ENCODE measurements at regions of chr1 and their contacts with region 1.

Region 1: GRCh38 chr1:151399890-151400495 is 620 bp downstream of the PSMB4 start:
- DNase-seq: peak; percentile 38
- ATAC-seq: peak; percentile 8
- H3K4me3 Mint-ChIP-seq: peak overlapping the region; percentile 86
- H3K27ac Mint-ChIP-seq: peak overlapping the region; percentile 96
- H3K4me1 Mint-ChIP-seq: peaks cover 35% of the 10 kb centered on the region
- H3K27me3 Mint-ChIP-seq: no peaks in the 10 kb centered on the region
- CTCF ChIP-seq: no peak

Region 2: GRCh38 chr1:151411884-151412283 is 11.9 kb after region 1 on chr1:
- CTCF ChIA-PET with region 1: interaction called, 3 read pairs
- POLR2A ChIA-PET with region 1: interaction called, 10 read pairs
- intact Hi-C with region 1: no loop called
- DNase-seq: no peak
- ATAC-seq: no peak
- H3K4me3 Mint-ChIP-seq: no peak overlapping the region
- H3K27ac Mint-ChIP-seq: no peak overlapping the region
- H3K4me1 Mint-ChIP-seq: no peaks in the 10 kb centered on the region
- H3K27me3 Mint-ChIP-seq: no peaks in the 10 kb centered on the region
- CTCF ChIP-seq: no peak

Region 3: DNA sequence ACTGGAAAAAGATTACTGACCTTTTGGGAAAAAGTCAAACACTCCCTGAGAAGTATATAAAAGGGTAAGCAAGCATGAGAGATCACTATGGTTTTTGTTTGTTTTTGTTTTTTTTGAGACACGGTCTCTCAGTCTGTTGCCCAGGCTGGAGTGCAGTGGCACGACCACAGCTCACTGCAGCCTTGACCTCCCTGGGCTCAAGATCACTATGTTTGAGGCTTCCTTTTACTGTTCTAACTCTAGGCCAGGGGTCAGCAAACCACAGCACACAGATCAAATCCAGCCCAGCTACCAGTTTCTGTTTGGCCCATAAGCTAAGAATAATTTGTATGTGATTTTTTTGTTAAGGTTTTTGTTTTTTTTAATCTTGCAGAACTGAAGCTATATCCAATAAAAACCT is 25.1 kb after region 1 on chr1:
- CTCF ChIA-PET with region 1: interaction called, 3 read pairs
- POLR2A ChIA-PET with region 1: interaction called, 11 read pairs
- intact Hi-C with region 1: no loop called
- DNase-seq: no peak
- ATAC-seq: no peak
- H3K4me3 Mint-ChIP-seq: no peak overlapping the region
- H3K27ac Mint-ChIP-seq: peak overlapping the region; percentile 4
- H3K4me1 Mint-ChIP-seq: no peaks in the 10 kb centered on the region
- H3K27me3 Mint-ChIP-seq: no peaks in the 10 kb centered on the region
- CTCF ChIP-seq: no peak

Region 4: DNA sequence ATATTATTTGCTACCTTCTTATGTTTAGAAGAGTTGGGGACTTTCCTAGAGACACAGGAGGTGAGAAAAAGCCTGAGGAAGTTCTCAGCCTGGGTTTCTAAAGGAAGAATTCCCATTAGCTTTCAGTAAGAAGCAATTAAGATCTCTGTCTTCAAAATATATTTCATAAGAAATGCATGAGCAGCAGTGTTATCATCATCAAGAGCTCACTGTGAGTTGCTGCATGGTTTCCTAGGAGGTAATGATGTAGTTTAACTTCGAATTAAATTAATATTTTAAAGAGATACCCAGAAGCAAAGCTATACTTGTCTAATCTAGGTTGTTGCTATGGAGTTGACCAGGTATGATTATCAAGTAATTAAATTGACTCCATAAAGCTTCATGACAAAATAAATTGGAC is 65.0 kb after region 1 on chr1:
- CTCF ChIA-PET with region 1: no interaction called
- POLR2A ChIA-PET with region 1: no interaction called
- intact Hi-C with region 1: no loop called
- DNase-seq: no peak
- ATAC-seq: no peak
- H3K4me3 Mint-ChIP-seq: no peak overlapping the region
- H3K27ac Mint-ChIP-seq: no peak overlapping the region
- H3K4me1 Mint-ChIP-seq: peaks cover under 1% of the 10 kb centered on the region
- H3K27me3 Mint-ChIP-seq: peaks cover 8% of the 10 kb centered on the region
- CTCF ChIP-seq: no peak

Region 5: DNA sequence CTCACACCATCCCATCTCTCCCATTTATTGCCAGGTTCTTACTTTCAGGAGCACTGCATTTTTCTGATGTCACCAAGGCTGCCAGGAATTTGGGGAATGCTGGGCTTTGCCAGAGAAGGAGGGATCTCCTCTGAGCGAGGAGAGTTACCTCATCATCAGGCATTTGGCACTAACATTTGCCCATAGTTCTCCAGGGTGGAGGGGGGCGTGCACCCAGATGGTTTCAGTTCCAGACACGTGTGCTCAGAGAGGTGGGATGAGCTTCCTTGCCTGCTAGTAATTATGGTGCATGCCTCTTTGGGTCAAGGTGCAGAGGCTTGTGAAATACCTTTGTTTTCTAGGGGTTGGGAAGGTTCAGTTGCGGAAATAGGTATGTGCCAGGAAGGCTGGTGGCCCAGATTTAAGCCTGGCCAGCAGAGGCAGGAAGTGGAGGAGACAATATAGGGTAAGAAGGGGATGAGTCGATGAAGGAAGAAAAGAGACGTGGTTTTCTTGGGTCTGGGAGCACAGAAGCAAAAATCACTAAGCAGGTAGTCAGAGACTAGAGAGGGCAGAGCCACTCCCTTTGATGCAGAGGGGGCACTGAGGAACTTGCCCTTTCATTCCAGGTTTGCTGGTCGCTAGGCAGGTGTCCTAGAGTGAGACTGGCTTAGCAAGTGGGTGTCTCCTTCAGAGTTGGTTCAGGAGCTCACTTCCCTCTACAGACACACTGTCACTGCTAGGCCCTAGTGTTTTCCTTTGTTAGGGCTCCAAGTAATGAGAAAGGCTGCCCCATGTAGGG is 147.3 kb after region 1 on chr1:
- CTCF ChIA-PET with region 1: no interaction called
- POLR2A ChIA-PET with region 1: no interaction called
- intact Hi-C with region 1: no loop called
- DNase-seq: no peak
- ATAC-seq: no peak
- H3K4me3 Mint-ChIP-seq: no peak overlapping the region
- H3K27ac Mint-ChIP-seq: no peak overlapping the region
- H3K4me1 Mint-ChIP-seq: no peaks in the 10 kb centered on the region
- H3K27me3 Mint-ChIP-seq: no peaks in the 10 kb centered on the region
- CTCF ChIP-seq: no peak

Region 6: DNA sequence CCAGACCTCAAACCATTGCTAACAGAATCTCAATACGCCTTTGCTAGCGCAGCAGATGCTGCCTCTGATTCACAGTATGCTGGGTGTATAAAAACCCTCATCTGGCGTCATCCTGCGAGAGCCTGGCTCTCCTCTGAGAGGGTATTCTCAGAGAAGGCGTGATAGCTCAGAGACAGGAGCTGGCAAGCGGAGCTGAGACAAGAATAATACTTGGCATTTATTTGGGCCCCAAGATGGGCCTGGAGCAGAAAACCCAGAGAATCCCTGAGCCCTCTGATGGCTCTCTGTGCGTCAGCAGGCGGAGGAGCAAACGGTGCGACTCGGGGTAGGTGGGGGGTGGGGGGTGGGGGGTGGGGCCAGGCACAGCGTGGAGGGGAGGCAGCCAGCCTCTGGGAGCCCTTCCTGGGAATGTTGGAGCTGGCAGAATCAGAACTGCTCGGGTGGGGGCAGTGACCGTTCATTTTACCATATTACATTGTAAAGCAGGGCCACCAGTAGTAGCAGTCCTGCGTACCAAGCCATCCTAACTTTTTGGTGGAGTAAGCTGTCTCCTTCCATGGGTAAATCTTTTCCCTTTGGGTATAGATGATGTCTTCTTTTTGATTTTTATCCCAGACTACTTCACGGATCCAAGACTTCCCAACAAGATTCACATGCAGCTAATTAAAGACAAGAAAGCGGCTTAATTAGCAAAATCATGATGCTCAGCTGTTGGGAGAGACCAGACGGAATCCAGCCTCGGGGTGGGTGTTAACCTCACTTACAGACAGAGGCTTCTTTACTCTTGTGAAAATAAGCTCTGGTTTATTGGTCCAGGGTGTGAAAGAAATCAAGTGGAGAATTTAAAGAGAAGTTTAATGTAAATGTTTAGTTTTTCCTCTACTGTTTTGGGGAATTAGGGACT is 328.4 kb after region 1 on chr1:
- CTCF ChIA-PET with region 1: no interaction called
- POLR2A ChIA-PET with region 1: no interaction called
- intact Hi-C with region 1: no loop called
- DNase-seq: no peak
- ATAC-seq: no peak
- H3K4me3 Mint-ChIP-seq: no peak overlapping the region
- H3K27ac Mint-ChIP-seq: no peak overlapping the region
- H3K4me1 Mint-ChIP-seq: no peaks in the 10 kb centered on the region
- H3K27me3 Mint-ChIP-seq: peaks cover 35% of the 10 kb centered on the region
- CTCF ChIP-seq: no peak

Measured in activated CD8-positive, alpha-beta T cell treated with anti-CD3 and anti-CD28 coated beads for 36 hours (primary cell).